AG04449 (cell line): ENCODE measurements at regions of chr13 and their contacts with region 1.

Region 1: GRCh38 chr13:110819203-110820014 is 95.5 kb downstream of the ANKRD10 start:
- DNase-seq: no peak
- H3K4me3 ChIP-seq: no peak overlapping the region
- CTCF ChIP-seq: peak; percentile 92

Region 2: DNA sequence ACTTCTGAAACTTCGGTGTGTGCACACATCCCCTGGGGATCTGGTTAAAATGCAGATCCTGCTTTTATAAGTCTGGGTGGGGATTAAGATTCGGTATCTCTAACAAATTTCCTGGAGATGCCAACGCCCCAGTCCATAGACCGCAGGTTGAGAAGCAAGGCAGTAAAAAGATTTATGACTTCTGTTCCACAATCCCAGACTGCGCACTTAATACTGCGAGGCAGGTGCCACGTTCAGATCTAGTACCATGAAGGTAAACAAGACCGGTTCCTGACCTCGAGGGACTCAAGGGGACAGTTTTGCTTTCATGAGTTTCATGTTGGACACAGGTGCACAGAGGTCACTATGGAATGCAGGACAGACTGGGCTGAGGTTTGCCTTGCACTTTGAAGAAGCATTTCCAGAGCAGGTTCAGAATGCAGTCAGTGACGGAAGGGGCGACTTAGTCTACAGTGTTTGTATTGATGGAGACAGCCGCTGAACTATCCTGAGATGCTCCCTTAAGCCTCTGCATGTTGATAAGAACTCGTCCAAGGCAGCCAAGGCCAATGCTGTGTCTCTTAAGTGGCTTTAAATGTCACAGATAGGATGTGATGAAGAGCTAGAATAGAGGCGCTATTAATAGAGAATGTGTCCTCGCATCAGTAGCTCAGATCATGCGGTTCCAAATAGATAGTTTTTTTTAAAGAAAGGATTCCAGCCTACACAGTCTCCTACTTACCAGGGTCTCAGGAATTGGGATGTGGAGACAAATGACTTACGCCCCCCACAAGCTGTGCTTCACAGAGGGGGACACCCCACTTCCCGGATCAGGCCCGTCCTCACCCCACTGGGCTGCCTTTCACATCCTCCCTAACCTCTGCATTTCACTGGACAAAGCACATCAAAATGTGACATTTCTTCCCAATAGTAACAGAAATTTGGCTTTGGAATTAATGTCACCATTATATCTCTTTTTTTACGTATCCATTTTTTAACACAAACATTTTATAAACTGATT is 935.9 kb before region 1 on chr13:
- CTCF ChIA-PET with region 1: no interaction called
- POLR2A ChIA-PET with region 1: no interaction called
- DNase-seq: no peak
- H3K4me3 ChIP-seq: no peak overlapping the region
- CTCF ChIP-seq: no peak

Region 3: GRCh38 chr13:110593430-110594130 is 225.8 kb before region 1 on chr13:
- CTCF ChIA-PET with region 1: interaction called, 10 read pairs
- POLR2A ChIA-PET with region 1: no interaction called
- DNase-seq: no peak
- H3K4me3 ChIP-seq: no peak overlapping the region
- CTCF ChIP-seq: peak; percentile 33

Region 4: DNA sequence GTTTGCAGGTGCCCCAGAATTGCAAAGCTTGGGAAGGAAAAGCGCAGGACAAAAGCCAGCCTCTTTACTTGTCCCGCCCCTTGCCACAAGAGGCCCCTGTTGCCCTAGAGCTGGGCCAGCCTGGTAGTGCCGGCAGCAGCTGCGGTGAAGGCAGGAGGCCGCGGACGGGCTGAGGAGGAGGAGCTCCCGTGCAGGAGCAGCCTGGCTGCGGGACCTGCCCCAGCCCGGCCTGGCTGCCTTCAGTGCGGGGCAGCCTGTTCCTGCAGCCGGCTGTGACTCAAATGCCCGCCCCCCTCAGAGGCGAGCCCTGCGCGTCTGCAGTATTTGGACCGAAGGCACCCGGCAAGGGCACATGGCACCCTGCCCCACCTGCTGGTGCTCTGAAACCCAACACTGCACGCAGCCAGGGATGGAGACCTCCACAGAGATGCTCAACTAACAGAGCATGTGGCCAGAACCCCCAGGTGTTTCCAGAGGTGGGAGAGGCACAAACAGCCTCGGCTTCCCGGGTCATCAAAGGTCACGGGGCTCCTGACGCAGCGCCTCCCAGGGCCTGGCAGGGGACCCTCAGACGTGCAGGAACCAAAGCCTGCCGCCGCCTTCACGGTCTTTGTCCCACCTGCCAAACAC is 174.4 kb before region 1 on chr13:
- CTCF ChIA-PET with region 1: interaction called, 15 read pairs
- POLR2A ChIA-PET with region 1: no interaction called
- DNase-seq: peak; percentile 10
- H3K4me3 ChIP-seq: no peak overlapping the region
- CTCF ChIP-seq: peak; percentile 57

Region 5: GRCh38 chr13:110788778-110789177 is 30.6 kb before region 1 on chr13:
- CTCF ChIA-PET with region 1: no interaction called
- POLR2A ChIA-PET with region 1: no interaction called
- DNase-seq: no peak
- H3K4me3 ChIP-seq: no peak overlapping the region
- CTCF ChIP-seq: no peak

Region 6: DNA sequence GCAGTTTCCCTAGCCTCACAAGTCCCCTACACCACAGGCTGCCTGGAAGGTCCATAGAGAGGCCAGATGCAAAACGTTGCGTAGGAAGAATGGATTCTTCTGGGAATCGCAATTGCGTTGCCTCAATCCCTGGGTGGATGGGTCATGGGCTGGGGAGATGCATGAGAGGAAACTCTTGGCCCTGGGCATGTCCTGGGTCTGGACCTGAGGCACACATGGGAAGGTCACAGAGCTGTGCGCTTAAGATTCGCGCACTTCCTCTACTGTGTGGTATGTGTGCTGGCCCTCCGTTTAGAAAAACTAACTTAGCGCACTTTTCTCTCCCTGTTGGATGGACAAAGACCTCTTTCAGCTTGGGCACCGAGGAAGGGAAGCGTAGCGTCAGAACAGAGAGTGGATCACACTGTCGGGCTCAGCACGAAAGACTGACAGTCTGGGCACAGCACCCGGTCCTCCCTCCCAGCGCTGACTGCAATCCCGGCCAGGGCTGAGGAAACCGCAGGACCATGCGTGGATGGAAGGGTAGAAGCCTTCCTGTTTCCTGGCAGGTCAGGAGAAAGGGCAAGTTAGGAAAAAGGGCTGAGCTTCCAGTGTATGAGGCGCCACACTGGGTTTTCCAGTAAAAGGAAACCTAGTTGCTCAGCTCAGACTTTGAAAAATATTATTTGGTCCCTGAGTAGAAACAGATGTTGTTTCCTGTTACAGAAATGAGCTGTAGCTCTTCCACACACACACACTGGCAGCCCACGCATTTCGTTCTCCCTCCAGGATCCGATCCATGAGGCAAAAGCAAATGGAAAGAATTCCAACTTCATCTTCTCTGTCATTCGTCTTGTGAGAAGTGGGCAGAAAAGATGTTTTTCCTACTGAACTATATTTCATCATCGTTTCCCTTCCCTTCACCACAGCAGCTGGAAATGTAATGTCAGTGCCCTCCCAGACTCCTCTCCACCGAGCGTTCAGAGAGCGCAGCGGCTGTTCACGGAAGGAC is 19.9 kb before region 1 on chr13:
- CTCF ChIA-PET with region 1: interaction called, 39 read pairs
- POLR2A ChIA-PET with region 1: no interaction called
- DNase-seq: peak; percentile 45
- H3K4me3 ChIP-seq: peak overlapping the region; percentile 48
- CTCF ChIP-seq: no peak